Pancreas (tissue), 10 donors: ENCODE measurements at regions of chr19 and their contacts with region 1.

Region 1: DNA sequence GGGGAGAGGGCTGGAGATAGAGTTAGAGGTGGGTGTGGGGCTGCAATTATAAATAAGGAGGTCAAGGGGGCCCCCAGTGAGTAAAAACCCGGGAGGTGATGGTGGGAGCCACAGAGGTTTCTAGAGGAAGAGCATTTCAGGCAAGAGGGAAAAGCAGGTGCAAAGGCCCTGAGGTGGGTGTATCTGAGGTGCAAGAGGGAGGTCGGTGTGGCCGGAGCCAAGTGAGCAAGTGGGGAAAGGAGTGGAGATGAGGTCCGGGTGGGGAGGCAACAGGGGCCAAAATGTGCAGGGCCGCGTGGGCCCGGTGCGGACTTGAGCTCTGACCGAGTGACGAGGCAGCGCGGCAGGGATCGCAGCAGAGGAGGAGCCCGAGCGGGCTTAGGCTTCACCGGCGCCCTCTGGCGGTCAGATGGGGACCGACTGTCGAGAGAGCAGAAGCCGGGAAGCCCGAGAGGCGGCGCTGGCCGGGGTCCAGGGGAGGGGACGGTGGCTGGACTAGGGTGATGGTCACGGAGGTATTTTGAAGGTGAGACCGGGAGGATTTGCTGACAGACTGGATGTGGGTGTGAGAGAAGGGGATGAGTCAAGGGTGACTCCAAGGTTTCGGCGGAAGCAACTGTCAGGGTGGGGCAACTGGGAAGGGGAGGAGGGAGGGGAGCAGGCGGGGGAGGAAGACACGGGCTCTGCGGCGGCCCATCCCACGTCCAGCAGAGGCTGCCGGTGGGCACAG is 17.7 kb upstream of the SPACA4 start:
- DNase-seq: peak; percentile 79 to 99 (median 92)
- ATAC-seq: peak; percentile 87 to 92 (median 90)
- H3K4me3 ChIP-seq: peak overlapping the region in 1 of 4 donors; percentile 40
- H3K27ac ChIP-seq: no peak overlapping the region
- H3K4me1 ChIP-seq: no peaks in the 10 kb centered on the region
- H3K27me3 ChIP-seq: no peaks in the 10 kb centered on the region
- CTCF ChIP-seq: peak; percentile 85 to 96 (median 90)

Region 2: DNA sequence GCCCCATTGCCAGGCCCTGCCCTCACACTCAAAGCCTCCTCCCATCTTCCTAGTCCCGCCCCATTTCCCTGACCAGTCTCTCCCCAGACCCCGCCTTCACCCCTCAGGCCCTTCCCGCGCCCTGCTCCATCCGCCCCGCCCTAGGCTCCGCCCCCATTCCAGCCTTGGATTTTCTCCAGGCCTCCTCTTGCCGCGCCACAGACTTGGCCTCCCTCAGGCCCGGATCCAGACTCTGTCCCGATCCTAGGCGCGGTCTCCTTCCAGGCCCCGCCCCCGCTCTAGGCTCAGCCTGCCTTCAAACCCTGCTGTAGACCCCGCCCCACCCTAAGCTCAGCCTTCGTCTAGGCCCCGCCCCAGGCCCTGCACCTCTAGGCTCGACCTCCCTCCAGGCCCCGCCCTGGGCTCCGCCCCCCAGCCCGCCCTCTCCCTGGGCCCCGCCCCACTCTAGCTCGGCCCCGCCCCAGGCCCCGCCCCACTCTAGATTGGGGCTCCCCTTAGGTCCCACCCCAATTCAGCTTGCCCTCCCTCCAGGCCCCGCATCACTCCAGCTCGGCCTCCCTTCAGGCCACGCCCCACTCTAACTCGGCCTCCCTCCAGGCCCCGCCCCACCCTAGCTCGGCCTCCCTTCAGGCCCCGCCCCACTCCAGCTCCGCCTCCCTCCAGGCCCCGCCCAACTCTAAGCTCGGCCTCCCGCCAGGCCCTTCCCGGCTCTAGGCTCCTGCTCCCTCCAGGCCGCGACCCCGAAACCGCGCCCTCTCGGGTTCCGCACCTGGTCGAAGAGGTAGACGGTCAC is 95.7 kb before region 1 on chr19:
- intact Hi-C with region 1: loop called in 2 of 3 experiments (anchors 5 kb)
- DNase-seq: peak; percentile 96 to 98 (median 98)
- ATAC-seq: peak; percentile 79 to 86 (median 82)
- H3K4me3 ChIP-seq: peak overlapping the region in 3 of 4 donors; percentile 14 to 58 (median 50)
- H3K27ac ChIP-seq: peak overlapping the region in 2 of 4 donors; percentile 61 to 66
- H3K4me1 ChIP-seq: peaks cover 0 to 10% (median 0%) of the 10 kb centered on the region in 3 donors
- H3K27me3 ChIP-seq: no peaks in the 10 kb centered on the region
- CTCF ChIP-seq: no peak

Region 3: GRCh38 chr19:48656840-48657474 is 68.1 kb after region 1 on chr19:
- intact Hi-C with region 1: no loop called
- DNase-seq: no peak
- ATAC-seq: no peak
- H3K4me3 ChIP-seq: no peak overlapping the region
- H3K27ac ChIP-seq: no peak overlapping the region
- H3K4me1 ChIP-seq: peaks cover 0 to 7% (median 0%) of the 10 kb centered on the region in 3 donors
- H3K27me3 ChIP-seq: no peaks in the 10 kb centered on the region
- CTCF ChIP-seq: no peak

Region 4: GRCh38 chr19:48696353-48697010 is 107.6 kb after region 1 on chr19:
- intact Hi-C with region 1: no loop called
- DNase-seq: peak in 2 of 6 donors; percentile 74
- ATAC-seq: peak; percentile 72 to 75 (median 73)
- H3K4me3 ChIP-seq: peak overlapping the region; percentile 23 to 63 (median 42)
- H3K27ac ChIP-seq: peak overlapping the region; percentile 33 to 86 (median 54)
- H3K4me1 ChIP-seq: peaks cover 0 to 5% (median 0%) of the 10 kb centered on the region in 3 donors
- H3K27me3 ChIP-seq: no peaks in the 10 kb centered on the region
- CTCF ChIP-seq: no peak